PC-9 (cell line): ENCODE measurements at regions of chr6 and their contacts with region 1.

Region 1: GRCh38 chr6:149082286-149082707 is 235.2 kb upstream of the TAB2 start:
- DNase-seq: peak; percentile 49 to 65
- H3K4me3 ChIP-seq: no peak overlapping the region
- H3K27ac ChIP-seq: no peak overlapping the region
- H3K4me1 ChIP-seq: peaks cover 30% of the 10 kb centered on the region
- H3K27me3 ChIP-seq: no peaks in the 10 kb centered on the region
- CTCF ChIP-seq: peak; percentile 81

Region 2: GRCh38 chr6:149170564-149171452 is 88.5 kb after region 1 on chr6:
- CTCF ChIA-PET with region 1: no interaction called
- POLR2A ChIA-PET with region 1: no interaction called
- intact Hi-C with region 1: loop called (anchors 5 kb)
- DNase-seq: no peak
- H3K4me3 ChIP-seq: no peak overlapping the region
- H3K27ac ChIP-seq: peak overlapping the region; percentile 78
- H3K4me1 ChIP-seq: peaks cover 34% of the 10 kb centered on the region
- H3K27me3 ChIP-seq: no peaks in the 10 kb centered on the region
- CTCF ChIP-seq: no peak

Region 3: GRCh38 chr6:149235130-149235561 is 152.8 kb after region 1 on chr6:
- CTCF ChIA-PET with region 1: no interaction called
- POLR2A ChIA-PET with region 1: no interaction called
- intact Hi-C with region 1: loop called (anchors 2 kb)
- DNase-seq: peak; percentile 48 to 75
- H3K4me3 ChIP-seq: no peak overlapping the region
- H3K27ac ChIP-seq: peak overlapping the region; percentile 87
- H3K4me1 ChIP-seq: peaks cover 45% of the 10 kb centered on the region
- H3K27me3 ChIP-seq: no peaks in the 10 kb centered on the region
- CTCF ChIP-seq: no peak

Region 4: DNA sequence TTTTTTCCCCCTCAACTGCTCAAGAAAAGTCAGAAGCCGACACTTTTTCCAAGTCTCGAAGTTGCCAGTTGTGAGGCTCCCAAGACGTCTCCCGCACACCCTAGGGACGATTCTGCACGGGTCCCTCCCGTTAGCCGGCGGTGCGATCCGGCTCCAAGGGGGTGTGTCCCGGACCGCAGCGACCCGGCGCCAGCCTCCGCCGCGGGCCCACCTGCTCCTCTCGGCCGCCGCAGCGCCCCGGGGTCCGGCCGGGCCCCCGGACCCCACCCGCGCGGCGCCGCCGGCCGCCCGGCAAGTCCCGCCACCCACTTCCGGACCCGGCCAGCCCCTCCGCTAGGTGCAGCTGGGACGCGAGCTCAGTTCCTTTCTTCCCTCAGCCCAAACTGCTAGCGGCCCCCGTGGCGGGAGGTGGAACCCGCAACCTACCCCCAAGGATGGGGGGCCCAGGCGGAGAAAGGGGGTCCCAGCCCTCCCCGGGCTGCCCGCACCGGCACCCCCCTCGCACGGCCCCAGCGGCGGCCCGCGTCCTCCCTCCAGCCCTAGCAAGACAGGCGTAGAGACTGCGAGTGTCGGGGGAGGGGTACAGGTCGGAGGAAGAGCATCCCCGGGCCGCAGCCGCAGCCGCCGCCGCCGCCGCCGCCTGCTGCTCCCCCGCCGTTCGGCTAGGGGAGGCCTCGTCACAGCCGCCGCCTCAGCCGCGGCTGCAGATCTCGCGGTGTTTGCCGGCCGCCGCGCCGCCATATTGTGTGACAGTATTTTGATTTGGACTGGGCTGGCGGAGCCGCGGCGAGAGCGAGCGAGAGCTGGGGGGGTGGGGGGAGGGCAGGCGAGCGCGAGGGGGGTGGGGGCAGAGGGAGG is 234.7 kb after region 1 on chr6:
- CTCF ChIA-PET with region 1: no interaction called
- POLR2A ChIA-PET with region 1: interaction called, 3 read pairs
- intact Hi-C with region 1: loop called (anchors 2 kb)
- DNase-seq: peak; percentile 74 to 78
- H3K4me3 ChIP-seq: peak overlapping the region; percentile 98
- H3K27ac ChIP-seq: peak overlapping the region; percentile 75
- H3K4me1 ChIP-seq: peaks cover 34% of the 10 kb centered on the region
- H3K27me3 ChIP-seq: no peaks in the 10 kb centered on the region
- CTCF ChIP-seq: no peak

Region 5: GRCh38 chr6:149513915-149514314 is 431.6 kb after region 1 on chr6:
- CTCF ChIA-PET with region 1: interaction called, 4 read pairs
- POLR2A ChIA-PET with region 1: no interaction called
- intact Hi-C with region 1: loop called (anchors 1 kb)
- DNase-seq: no peak
- H3K4me3 ChIP-seq: no peak overlapping the region
- H3K27ac ChIP-seq: no peak overlapping the region
- H3K4me1 ChIP-seq: no peaks in the 10 kb centered on the region
- H3K27me3 ChIP-seq: no peaks in the 10 kb centered on the region
- CTCF ChIP-seq: no peak